ENCODE measurements at regions of chr7 and their contacts with region 1.

Region 1: DNA sequence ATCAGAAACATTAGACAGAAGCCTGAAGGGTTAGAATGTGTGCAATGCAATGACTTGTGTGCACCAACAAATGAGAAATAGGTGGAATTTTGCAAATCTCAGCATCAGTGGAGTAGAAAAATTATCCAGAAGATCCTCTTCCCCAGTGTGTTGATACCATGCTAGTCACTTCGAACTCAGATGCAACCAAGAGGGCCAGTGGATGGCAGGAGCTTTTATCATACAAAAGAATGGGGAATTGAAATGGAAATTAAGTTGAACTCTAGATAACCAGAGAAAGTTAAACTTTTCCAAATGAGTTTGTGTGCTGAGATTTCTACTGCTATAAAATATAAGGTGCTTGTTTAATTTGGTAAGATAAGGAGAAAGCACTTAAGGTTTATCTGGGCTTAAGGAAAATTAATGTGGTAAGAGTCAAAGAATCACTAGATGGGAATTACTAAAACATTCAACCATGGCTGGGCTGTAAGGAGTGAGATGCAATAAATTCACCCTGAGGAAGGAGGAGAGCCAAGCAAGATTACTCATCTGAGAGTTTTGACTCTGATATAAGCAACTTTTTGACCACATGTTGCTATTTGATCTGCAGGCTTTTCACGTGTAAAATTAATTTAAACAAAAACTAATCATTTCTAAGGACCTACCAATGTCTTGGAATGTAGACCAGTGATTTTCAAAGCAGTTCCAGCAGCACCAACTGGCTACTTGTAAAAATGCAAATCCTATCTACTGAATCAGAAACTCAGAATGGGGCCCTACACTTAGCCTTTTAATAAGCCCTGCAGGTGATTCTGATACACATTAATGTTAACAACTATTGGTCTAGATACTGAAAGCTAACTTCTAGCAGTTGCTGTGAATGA is 113.2 kb downstream of the CDC14C start:
- DNase-seq: no peak
- H3K4me3 Mint-ChIP-seq: no peak overlapping the region
- H3K27ac Mint-ChIP-seq: no peak overlapping the region
- H3K4me1 Mint-ChIP-seq: no peaks in the 10 kb centered on the region
- H3K27me3 Mint-ChIP-seq: no peaks in the 10 kb centered on the region
- CTCF ChIP-seq: no peak

Region 2: DNA sequence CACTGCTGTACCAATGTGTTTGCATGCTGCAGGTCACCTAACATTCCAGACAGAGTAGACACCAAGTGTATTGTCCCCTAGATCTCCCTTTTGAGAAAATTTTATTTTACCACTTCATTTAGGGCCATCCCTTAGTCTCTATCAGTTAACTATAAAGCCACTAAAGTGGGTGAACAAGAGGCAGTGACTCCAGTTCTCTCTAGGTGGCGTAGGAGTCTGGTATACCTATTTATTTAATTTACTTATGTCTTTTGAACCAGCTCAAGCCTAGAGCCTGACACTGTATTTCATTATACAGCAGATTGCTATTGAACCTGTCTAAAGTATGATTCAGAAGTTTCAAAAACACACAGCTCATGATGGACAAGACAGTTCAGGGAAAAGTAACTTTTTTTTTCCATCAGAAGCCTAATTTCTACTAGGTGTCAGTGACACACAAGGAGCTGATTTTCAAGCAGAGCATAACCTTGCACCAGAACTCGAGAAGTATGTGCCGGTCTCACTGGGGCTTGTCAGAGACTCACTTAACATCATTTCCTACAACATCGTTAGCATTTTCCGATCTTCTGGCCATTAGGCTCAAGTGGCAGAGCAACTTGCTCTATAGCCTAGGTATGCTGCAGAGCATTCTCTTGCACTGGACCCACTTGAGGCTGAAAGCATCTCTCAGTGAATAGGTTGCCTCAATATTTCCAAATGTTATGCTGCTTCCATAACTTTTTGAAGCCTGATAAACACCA is 62.2 kb after region 1 on chr7:
- CTCF ChIA-PET with region 1: no interaction called
- intact Hi-C with region 1: loop called (anchors 10 kb)
- DNase-seq: no peak
- H3K4me3 Mint-ChIP-seq: no peak overlapping the region
- H3K27ac Mint-ChIP-seq: no peak overlapping the region
- H3K4me1 Mint-ChIP-seq: no peaks in the 10 kb centered on the region
- H3K27me3 Mint-ChIP-seq: no peaks in the 10 kb centered on the region
- CTCF ChIP-seq: no peak